Spleen (tissue), 13 donors: ENCODE measurements at regions of chr4 and their contacts with region 1.

Region 1: DNA sequence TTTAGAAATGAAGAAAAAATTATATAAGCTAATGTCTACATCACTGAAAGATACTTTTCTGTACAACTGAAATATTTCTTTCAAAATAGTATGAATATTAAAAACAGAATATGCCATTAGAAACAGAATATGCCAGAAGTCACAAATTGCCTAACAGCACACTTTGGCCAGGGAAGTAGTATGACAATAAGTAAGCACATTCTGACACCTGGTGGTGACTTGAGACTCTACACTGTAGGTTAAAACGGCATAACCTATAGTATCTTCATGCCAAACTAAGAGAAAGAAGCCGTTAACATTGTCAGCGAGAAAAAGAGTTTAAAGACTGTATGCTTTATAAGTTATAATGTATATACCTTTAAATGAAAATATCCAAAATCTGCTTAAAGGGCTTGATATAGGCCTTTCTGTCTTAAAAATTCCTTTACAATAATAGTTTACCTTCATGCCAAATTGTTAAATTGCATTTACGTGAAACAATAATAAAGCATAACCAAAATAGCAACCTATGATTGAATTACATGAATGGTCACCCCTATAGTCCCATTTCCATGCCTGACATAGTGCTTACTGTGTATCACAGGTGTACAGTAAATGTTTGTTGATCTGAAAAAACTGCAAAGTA is 32.8 kb downstream of the FAM13A start:
- DNase-seq: no peak
- H3K4me3 ChIP-seq: no peak overlapping the region
- H3K27ac ChIP-seq: no peak overlapping the region
- H3K4me1 ChIP-seq: peaks cover 0 to 6% (median 0%) of the 10 kb centered on the region in 6 donors
- H3K27me3 ChIP-seq: no peaks in the 10 kb centered on the region
- CTCF ChIP-seq: peak; percentile 73 to 89 (median 83)
- POLR2A ChIP-seq: no peak

Region 2: DNA sequence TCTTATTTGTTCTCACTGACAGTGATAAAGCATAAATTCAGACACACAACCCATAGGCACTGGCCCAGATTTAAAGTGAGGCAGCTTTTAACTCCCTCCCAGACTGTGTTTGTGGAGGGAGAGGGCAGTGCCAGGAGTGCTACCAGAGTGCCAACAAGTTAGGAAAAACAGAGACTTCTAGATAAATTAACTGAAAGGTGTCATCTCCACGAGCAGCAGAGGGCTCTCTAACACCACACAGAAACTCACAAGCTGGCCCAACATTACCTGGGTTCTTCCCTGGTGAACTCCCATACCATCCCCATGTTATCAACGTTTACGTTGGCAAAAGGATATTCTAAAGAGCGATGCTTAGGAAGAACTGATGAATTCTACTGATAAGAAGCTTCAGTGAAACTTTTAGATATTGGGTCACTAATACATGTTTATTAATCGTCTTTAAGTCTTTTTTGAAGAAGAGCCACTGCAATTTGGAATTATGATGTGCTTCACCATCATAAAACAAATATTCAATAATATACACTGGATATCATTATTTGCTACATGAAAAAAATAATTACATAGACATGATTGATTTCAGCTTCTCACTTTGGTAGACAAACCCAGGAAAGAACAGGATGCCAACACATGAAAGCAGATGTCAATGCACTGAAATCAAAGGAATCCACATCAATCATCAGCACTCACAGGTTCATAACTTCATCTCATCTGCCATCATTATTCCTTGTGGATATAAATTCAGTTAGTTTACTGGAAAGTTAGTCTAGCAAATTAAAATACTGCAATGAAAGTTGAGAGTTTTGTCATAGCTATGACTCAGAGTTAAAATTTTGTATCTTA is 205.3 kb before region 1 on chr4:
- intact Hi-C with region 1: loop called (anchors 5 kb)
- DNase-seq: no peak
- H3K4me3 ChIP-seq: no peak overlapping the region
- H3K27ac ChIP-seq: no peak overlapping the region
- H3K4me1 ChIP-seq: peaks cover 0 to 65% (median 44%) of the 10 kb centered on the region in 6 donors
- H3K27me3 ChIP-seq: no peaks in the 10 kb centered on the region
- CTCF ChIP-seq: peak in 7 of 11 experiments; percentile 34 to 55 (median 42)
- POLR2A ChIP-seq: no peak